Gastrocnemius medialis (tissue), 4 donors: ENCODE measurements at regions of chr7 and their contacts with region 1.

Region 1: DNA sequence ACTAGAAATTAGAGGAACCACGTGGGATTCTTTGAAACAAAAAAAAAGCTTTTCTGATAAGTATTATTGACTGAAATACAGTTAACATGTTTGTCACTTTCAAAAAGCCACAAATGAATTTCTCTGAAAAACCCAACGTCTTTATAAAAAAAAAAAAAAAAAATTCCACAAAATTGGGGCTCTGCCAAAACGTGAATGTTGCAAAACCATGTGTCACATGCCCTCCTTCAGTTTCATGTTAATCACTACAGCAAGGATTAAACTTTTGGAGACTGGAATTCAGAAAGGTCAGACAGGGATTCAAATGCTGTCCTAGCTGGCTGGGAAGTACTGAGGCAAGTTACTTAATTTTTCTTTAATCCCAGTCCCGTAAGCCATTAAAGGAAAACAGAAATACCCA is 278.0 kb upstream of the KLF14 start:
- DNase-seq: no peak
- ATAC-seq: peak; percentile 55 to 66
- H3K4me3 ChIP-seq: peak overlapping the region in 1 of 4 donors; percentile 23
- H3K27ac ChIP-seq: peak overlapping the region; percentile 68 to 78 (median 75)
- H3K4me1 ChIP-seq: peaks cover 97 to 98% of the 10 kb centered on the region in 2 donors
- H3K27me3 ChIP-seq: no peaks in the 10 kb centered on the region
- CTCF ChIP-seq: no peak
- POLR2A ChIP-seq: no peak

Region 2: GRCh38 chr7:130891254-130892094 is 120.5 kb before region 1 on chr7:
- in situ Hi-C with region 1: no loop called
- intact Hi-C with region 1: loop called (anchors 2 kb)
- DNase-seq: peak; percentile 74 to 87
- ATAC-seq: peak; percentile 31 to 37
- H3K4me3 ChIP-seq: peak overlapping the region; percentile 0 to 39 (median 16)
- H3K27ac ChIP-seq: peak overlapping the region; percentile 89 to 97 (median 94)
- H3K4me1 ChIP-seq: peaks cover 90 to 95% of the 10 kb centered on the region in 2 donors
- H3K27me3 ChIP-seq: no peaks in the 10 kb centered on the region
- CTCF ChIP-seq: no peak
- POLR2A ChIP-seq: peak; percentile 15 to 58

Region 3: DNA sequence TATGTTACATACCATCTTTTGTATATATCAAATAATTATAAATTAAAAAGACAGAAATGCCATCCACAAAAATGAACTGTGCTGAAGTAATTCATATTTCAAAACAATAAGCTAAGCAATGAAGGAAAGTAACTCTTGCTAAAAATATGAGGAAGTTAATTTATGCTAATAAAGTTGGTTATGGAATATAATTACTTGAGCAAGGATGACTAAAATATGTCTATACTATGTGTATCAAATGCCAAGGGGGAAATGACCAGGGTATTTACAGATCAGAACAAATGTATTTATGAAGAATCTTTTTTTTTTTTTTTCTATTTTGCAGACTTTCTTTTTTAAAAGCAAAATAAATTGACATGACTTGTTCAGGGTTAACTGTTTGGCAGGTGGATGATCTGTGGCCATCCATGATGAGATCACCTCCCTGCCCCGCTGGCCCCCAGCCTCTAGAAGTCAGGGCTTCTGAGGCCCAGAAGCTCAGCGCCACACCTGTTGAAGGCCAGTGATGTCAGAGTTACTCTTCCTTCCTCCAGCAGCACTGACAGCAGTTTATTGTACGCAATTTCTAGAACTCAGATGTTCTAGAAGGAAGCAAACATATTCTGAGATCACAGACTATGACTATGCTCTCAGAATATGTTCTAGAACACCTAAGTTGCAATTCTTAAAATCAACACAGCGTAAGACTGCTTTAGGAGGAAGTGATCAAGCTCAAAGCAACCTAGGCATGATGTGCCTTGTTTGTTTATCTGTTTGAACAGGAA is 81.9 kb before region 1 on chr7:
- in situ Hi-C with region 1: no loop called
- intact Hi-C with region 1: no loop called
- DNase-seq: no peak
- ATAC-seq: peak; percentile 13 to 14
- H3K4me3 ChIP-seq: peak overlapping the region in 2 of 4 donors; percentile 27 to 28
- H3K27ac ChIP-seq: peak overlapping the region; percentile 91 to 97 (median 94)
- H3K4me1 ChIP-seq: peaks cover 91 to 98% of the 10 kb centered on the region in 2 donors
- H3K27me3 ChIP-seq: no peaks in the 10 kb centered on the region
- CTCF ChIP-seq: no peak
- POLR2A ChIP-seq: no peak

Region 4: DNA sequence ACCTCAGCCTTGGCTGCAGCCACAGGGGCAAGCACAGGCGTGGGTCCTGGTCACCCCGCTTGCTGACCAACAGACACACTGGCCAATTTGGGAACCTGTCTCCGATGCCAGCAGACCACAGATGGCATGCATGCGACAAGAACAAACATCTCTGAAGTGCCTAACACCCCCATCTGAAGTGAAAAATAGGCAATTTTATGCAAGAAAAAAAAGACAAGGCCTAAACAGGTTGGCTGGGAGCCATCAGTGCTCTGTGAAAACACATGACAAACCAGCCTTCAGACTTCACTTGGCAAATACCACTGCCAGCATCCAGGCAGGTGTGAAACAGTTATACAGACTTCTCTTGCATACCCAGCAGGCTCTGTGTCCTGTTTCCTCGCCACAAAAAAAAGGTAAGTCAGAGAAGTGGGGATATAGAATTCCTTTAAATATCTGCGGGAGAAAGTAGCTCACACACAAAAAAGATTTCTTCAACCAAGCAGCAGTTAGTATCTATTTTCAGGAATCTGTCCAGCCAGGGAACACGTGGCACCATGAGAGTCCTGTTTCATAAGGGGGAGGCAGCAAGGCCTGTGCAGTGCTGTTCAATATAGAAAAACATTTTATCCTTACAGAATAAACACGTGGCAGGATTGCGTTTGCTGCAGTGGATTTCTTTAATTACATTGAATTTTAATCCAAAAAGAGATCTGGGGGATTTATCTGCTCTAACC is 22.3 kb after region 1 on chr7:
- in situ Hi-C with region 1: no loop called
- intact Hi-C with region 1: loop called (anchors 2 kb)
- DNase-seq: peak in 1 of 2 donors; percentile 45
- ATAC-seq: peak; percentile 50 to 81
- H3K4me3 ChIP-seq: peak overlapping the region in 1 of 4 donors; percentile 5
- H3K27ac ChIP-seq: peak overlapping the region; percentile 65 to 72 (median 69)
- H3K4me1 ChIP-seq: peaks cover 82 to 93% of the 10 kb centered on the region in 2 donors
- H3K27me3 ChIP-seq: no peaks in the 10 kb centered on the region
- CTCF ChIP-seq: no peak
- POLR2A ChIP-seq: no peak

Region 5: DNA sequence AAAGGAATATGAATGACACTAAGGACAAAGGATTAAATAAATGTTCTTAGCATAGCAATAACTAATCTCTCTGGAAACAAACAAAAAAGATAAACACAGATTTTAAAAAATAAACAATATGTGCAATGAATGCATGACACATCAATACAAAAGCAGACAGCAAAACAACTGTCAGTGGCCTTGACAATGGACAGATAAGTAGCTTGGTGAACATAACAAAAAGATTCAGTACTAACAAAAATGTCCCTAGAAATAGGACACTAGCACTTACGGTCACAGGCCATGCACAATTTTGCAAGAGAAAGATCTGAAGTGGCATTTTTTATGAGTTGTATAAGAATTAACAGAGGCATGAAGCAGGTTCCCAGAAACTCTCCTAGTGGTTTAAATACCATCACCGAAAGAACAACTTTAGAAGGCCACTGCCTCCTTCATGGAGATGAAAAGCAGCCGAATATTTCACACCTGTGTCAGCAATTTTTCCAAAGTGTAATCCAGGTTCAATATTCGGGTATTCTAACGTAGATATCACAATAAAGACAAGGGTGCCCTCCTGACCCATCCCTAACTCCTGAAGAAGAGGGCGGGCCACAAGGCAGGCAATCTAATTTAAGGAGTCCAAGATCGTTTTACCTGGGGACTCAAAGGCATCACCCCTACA is 84.4 kb after region 1 on chr7:
- in situ Hi-C with region 1: no loop called
- intact Hi-C with region 1: no loop called
- DNase-seq: no peak
- ATAC-seq: no peak
- H3K4me3 ChIP-seq: no peak overlapping the region
- H3K27ac ChIP-seq: peak overlapping the region; percentile 15 to 100 (median 58)
- H3K4me1 ChIP-seq: peaks cover 90 to 97% of the 10 kb centered on the region in 2 donors
- H3K27me3 ChIP-seq: no peaks in the 10 kb centered on the region
- CTCF ChIP-seq: no peak
- POLR2A ChIP-seq: no peak